ENCODE measurements at regions of chr5 and their contacts with region 1.

Region 1: DNA sequence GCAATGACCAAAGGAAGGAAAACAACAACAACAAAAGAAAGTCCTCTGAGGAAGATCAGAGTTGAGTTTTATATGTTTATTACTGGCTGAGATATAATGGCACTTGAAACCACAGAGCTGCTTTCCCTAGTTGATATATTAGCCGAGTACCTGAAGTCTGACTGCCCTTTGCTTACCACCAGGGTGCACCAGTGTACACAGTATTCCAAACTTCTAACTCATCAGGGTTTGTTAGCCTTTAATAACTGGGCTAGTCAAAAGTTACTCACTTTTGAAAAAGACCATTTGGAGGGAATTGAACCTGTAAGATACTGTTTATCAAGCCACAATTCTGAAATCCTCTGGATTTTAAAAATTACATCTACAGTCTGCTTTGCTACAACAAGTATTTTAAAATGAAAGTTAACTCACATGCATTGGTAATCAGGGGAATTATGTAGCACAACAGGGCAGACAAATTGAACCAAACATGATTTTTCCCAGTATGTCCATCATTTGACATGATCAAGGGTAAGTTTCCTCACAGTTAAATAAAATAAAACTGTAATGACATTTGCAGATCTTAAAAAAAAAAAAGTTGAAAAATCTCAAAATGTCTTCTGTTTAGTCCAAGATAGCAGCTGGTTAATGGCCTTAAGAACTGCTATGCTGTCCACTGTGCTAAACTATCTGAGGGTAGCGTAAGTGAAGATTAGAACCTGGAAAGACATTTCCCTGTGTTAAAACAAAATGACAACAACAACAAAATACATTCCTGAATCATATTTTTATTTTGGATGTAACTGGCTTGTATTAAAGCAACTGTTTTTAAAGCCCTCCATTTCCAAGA is 57.3 kb upstream of the C6 start:
- DNase-seq: peak in 1 of 2 donors; percentile 71
- ATAC-seq: peak; percentile 82 to 94 (median 93)
- H3K4me3 ChIP-seq: no peak overlapping the region
- H3K27ac ChIP-seq: peak overlapping the region in 4 of 10 donors; percentile 28 to 45 (median 36)
- H3K4me1 ChIP-seq: peaks cover 0 to 21% (median 4%) of the 10 kb centered on the region in 9 donors
- H3K27me3 ChIP-seq: no peaks in the 10 kb centered on the region
- CTCF ChIP-seq: peak; percentile 39 to 83 (median 73)

Region 2: GRCh38 chr5:41392016-41392415 is 121.4 kb after region 1 on chr5:
- intact Hi-C with region 1: no loop called
- DNase-seq: no peak
- ATAC-seq: peak in 3 of 8 donors; percentile 16 to 42 (median 37)
- H3K4me3 ChIP-seq: no peak overlapping the region
- H3K27ac ChIP-seq: no peak overlapping the region
- H3K4me1 ChIP-seq: peaks cover 0 to 22% (median 0%) of the 10 kb centered on the region in 9 donors
- H3K27me3 ChIP-seq: no peaks in the 10 kb centered on the region
- CTCF ChIP-seq: no peak

Region 3: DNA sequence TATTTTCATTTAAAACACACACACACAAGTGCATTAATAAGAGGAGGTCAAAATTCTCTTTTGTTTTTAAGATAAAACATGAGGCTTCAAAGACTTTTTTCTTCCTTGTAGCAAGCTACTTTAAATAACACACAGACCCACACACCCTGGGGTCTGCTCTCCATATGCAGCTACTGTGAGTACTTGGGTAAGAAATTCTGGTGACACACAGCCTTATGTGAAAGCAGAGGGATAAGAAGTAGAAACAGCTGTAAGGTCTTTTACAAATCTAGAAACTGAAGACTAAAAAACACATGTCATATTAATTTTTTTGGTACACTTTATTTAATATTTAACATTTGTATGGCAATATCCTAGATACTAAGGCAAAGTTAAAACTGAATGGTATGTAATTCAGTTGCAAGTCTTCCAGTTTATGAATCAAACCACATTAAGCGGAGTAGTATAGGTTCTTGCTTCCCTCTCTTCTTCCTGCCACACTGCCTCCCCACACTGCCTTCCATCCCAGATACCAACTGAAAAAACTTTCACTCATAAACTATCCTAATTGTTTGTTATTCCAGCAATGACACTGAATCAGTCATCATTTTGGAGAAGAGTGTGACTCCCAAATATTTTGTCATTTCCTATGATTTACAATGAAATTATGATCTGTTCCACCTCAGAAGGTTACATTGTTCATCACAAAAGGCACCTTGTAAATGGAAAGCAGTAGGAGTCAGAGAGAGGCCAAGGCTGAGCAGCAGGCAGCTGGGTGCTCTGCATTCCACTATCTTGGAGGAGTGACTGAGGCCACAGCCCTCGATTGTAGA is 147.8 kb after region 1 on chr5:
- intact Hi-C with region 1: loop called in 1 of 10 experiments (anchors 5 kb)
- DNase-seq: no peak
- ATAC-seq: peak in 7 of 8 donors; percentile 11 to 74 (median 60)
- H3K4me3 ChIP-seq: no peak overlapping the region
- H3K27ac ChIP-seq: peak overlapping the region in 8 of 10 donors; percentile 7 to 68 (median 46)
- H3K4me1 ChIP-seq: peaks cover 2 to 21% (median 10%) of the 10 kb centered on the region in 9 donors
- H3K27me3 ChIP-seq: no peaks in the 10 kb centered on the region
- CTCF ChIP-seq: no peak

Region 4: GRCh38 chr5:41524174-41524573 is 253.5 kb after region 1 on chr5:
- intact Hi-C with region 1: loop called in 4 of 10 experiments (anchors 2 to 5 kb)
- DNase-seq: no peak
- ATAC-seq: no peak
- H3K4me3 ChIP-seq: no peak overlapping the region
- H3K27ac ChIP-seq: no peak overlapping the region
- H3K4me1 ChIP-seq: peaks cover 0 to 14% (median 0%) of the 10 kb centered on the region in 9 donors
- H3K27me3 ChIP-seq: no peaks in the 10 kb centered on the region
- CTCF ChIP-seq: peak in 6 of 9 donors; percentile 6 to 25 (median 21)

Region 5: DNA sequence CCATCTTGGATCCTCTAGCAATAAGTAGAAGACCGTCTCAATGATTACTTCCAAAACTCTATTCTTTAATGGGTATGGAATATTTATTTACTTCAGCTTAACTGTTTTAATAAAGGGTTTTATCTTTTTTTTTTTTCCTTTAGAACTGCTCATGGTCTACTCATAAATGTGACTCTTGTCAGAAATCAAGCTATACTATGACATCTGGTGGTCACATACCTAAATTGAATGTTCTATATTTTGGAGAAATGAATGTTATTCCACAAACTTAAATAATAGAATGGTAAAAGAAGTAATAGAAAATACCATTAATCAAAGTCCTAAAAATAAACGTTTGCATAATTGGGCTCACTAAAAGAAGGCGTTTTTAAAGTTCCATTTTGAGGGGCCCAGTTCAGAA is 371.0 kb after region 1 on chr5:
- intact Hi-C with region 1: loop called in 7 of 10 experiments (anchors 5 to 10 kb)
- DNase-seq: no peak
- ATAC-seq: no peak
- H3K4me3 ChIP-seq: no peak overlapping the region
- H3K27ac ChIP-seq: no peak overlapping the region
- H3K4me1 ChIP-seq: no peaks in the 10 kb centered on the region
- H3K27me3 ChIP-seq: no peaks in the 10 kb centered on the region
- CTCF ChIP-seq: peak in 6 of 9 donors; percentile 19 to 43 (median 36)

Measured in heart right ventricle (tissue), 16 donors.